ENCODE measurements at regions of chr15 and their contacts with region 1.

Region 1: DNA sequence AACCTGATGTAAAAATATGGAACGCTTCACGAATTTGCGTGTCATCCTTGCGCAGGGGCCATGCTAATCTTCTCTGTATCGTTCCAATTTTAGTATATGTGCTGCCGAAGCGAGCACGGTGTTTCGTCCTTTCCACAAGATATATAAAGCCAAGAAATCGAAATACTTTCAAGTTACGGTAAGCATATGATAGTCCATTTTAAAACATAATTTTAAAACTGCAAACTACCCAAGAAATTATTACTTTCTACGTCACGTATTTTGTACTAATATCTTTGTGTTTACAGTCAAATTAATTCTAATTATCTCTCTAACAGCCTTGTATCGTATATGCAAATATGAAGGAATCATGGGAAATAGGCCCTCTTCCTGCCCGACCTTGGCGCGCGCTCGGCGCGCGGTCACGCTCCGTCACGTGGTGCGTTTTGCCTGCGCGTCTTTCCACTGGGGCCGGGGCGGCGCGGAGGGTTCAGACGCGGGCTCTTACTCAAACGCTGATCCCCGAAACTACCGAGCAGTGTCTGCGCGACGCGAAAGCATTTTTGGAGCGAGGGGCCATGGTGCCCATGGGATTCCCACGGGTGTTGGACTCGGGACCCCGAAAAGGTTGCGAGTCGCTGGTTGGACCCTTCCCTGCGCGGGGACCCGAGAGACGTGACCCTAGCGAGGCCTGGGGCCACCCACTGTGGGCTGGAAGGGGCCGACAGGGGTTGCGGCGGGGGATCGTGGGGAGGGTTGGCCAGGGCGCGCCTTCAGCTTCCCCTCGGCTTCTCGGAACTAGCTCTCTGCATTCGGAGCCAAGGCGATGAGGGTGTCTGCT is at the start of gene RNU6-1:
- DNase-seq: peak; percentile 93 to 97 (median 94)
- ATAC-seq: peak; percentile 87 to 95 (median 91)
- H3K4me3 ChIP-seq: peak within 1 kb of the TSS; percentile 56 to 97 (median 88)
- H3K27ac ChIP-seq: peak within 1 kb of the TSS; percentile 85 to 99 (median 95)
- H3K4me1 ChIP-seq: peaks cover 0 to 37% (median 28%) of the 10 kb centered on the region in 12 donors
- H3K27me3 ChIP-seq: peaks cover 0 to 12% (median 9%) of the 10 kb centered on the region in 9 donors
- CTCF ChIP-seq: no peak
- POLR2A ChIP-seq: peak in 1 of 2 donors; percentile 84
- total RNA-seq, gene RNU6-1: not detected

Region 2: DNA sequence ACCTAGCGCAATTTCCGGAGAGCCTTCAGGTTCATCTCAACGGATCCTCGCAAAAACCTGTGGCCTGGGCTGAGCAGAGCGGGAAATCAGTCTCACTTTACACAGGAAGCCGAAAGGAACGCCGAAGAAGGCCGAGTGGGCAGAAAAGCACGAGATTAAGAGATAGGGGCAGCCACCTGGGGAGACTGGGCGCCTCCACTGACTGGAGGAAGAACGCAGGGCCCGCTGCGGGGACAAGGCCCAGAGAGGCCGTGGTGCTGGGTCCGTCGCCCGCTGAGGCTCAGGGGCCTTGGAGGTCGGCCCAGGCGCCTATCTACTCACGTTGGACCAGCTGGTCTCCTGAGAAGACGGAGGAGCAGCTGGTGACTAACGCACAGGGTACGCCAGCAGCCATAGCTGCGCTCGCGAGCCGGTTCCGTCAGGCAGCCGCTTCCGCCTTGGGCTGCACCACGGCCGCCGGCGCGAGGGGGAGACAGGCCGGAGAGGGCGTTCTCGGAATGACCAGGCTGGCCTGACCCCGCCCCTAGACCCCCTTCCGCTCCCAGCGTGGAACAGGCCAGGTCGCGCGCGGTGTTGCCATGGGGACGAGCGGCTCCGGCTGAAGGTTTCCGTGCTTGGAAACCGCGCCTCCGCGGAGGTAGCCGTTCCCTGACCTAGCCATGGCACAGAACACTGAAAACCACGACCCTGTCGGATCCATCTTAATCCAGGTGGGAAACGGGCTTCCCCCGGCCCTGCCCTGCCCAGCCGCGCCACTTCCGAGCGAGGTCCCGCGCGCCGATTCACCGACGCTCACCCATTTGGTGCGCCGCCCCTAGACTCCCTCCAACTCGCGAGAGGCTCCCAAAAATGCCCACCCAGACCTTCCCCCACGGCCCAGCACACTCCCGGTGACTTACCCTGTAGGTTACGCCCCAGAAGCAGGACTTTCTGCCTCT is 585.6 kb before region 1 on chr15 and contains the starts of genes AAGAB and IQCH:
- intact Hi-C with region 1: loop called in 1 of 10 experiments (anchors 5 kb)
- DNase-seq: peak; percentile 97 to 100 (median 98)
- ATAC-seq: peak; percentile 99 to 100 (median 100)
- H3K4me3 ChIP-seq: peak within 1 kb of the TSS; percentile 73 to 97 (median 88)
- H3K27ac ChIP-seq: peak within 1 kb of the TSS; percentile 10 to 91 (median 81)
- H3K4me1 ChIP-seq: peaks cover 0 to 29% (median 12%) of the 10 kb centered on the region in 12 donors
- H3K27me3 ChIP-seq: no peaks in the 10 kb centered on the region
- CTCF ChIP-seq: peak in 3 of 12 donors; percentile 13 to 22 (median 22)
- POLR2A ChIP-seq: peak in 1 of 2 donors; percentile 76
- total RNA-seq, gene AAGAB: 16.4 to 32.4 (median 28.0) TPM
- total RNA-seq, gene IQCH: 0.24 to 3.3 (median 1.4) TPM

Region 3: DNA sequence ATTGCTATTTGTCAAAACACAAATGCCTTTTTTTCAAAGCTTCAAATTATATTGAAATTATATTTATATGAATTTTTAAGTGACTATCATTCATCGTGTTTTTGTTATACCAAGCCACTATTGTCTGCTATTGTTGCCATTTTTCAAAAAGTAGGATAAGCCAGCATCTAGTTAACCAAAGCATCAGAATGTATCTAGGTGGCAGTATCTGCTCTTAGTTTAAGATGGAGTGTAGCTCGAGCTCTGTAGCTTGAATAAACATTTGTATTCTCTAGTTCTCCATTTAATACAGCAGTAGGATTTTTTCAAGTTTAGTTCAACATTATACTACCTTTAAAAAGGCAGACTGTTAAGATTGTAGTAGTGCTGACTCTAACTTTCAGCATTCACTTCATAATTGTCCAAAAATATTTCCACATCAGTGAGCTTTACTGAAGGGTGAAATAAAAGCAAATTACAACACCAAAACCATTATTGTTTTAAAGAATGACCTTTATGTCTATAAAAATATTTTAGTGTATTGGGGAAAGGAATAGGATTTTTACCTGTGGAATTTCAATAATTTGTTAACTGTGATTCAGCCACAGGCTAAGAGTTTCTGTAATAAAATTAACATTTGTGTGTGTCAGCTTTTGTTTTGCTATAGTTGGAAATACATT is 338.8 kb before region 1 on chr15:
- intact Hi-C with region 1: loop called in 4 of 10 experiments (anchors 5 kb)
- DNase-seq: no peak
- ATAC-seq: peak in 1 of 4 donors; percentile 39
- H3K4me3 ChIP-seq: peak overlapping the region in 1 of 12 donors; percentile 5
- H3K27ac ChIP-seq: no peak overlapping the region
- H3K4me1 ChIP-seq: peaks cover 0 to 6% (median 0%) of the 10 kb centered on the region in 12 donors
- H3K27me3 ChIP-seq: no peaks in the 10 kb centered on the region
- CTCF ChIP-seq: peak in 9 of 12 donors; percentile 10 to 52 (median 38)
- POLR2A ChIP-seq: no peak

Region 4: DNA sequence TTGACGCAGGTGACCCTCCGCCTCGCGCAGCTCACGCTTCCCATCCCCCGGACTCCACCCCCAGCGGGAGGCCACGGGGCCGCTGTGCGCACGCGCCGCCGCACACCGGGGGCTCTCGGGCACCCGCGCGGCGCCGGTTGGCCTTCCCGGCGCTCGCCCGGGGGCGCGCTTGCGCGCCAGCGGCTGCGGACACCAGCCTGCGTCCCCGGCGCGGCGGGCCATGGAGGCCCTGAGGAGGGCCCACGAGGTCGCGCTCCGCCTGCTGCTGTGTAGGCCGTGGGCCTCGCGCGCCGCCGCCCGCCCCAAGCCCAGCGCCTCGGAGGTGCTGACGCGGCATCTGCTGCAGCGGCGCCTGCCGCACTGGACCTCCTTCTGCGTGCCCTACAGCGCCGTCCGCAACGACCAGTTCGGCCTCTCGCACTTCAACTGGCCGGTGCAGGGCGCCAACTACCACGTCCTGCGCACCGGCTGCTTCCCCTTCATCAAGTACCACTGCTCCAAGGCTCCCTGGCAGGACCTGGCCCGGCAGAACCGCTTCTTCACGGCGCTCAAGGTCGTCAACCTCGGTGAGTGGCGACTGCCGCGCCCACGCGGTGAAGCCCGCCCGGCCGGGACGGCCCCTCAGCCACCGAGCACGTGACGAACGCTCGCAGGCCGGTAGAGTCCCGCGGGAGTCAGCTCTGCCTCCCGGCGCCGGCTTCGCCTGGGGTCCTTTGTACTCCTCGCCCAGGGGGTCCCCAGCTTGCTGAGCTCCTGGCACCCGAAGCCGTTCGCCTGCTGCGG is 318.9 kb before region 1 on chr15 and contains the start of gene C15orf61:
- intact Hi-C with region 1: loop called in 7 of 10 experiments (anchors 2 to 10 kb)
- DNase-seq: peak; percentile 87 to 92 (median 89)
- ATAC-seq: peak; percentile 76 to 95 (median 90)
- H3K4me3 ChIP-seq: peak within 1 kb of the TSS; percentile 54 to 95 (median 74)
- H3K27ac ChIP-seq: peak within 1 kb of the TSS; percentile 92 to 99 (median 97)
- H3K4me1 ChIP-seq: peaks cover 0 to 37% (median 25%) of the 10 kb centered on the region in 12 donors
- H3K27me3 ChIP-seq: no peaks in the 10 kb centered on the region
- CTCF ChIP-seq: peak in 3 of 12 donors; percentile 10 to 26 (median 11)
- POLR2A ChIP-seq: peak in 1 of 2 donors; percentile 77
- total RNA-seq, gene C15orf61: 5.0 to 11.7 (median 10.0) TPM

Region 5: DNA sequence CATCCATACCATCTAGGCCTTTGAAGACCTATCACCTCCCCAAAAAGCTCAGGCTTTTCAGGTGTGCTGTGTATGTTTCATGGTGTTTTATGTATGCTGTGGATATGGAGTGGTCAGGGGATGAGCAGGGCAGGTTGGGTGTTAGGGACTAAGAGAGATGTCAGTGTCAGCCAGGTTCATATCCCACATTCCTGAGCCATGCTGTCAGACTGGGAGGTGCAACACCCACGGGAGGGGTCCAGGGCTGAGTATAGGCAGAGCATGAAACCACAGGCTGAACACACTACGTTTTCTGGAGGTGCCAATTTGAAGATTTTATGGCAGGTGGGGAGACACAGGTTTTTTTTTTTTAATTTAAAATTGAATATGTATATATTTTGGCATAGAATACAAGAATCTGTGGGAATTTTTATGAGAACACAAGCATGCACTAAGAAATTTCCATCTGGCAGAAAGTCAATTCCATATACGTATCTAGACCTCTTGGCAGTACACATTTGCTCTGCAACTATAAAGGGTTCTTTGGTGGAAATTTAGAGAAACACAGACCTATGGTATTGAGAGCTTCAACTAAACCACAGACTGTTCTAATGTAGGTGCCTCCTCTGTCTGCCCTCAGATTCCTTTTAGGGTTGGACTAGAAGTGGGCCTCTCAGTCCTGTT is 101.6 kb after region 1 on chr15:
- intact Hi-C with region 1: no loop called
- DNase-seq: no peak
- ATAC-seq: no peak
- H3K4me3 ChIP-seq: no peak overlapping the region
- H3K27ac ChIP-seq: peak overlapping the region in 1 of 12 donors; percentile 26
- H3K4me1 ChIP-seq: peaks cover 0 to 43% (median 24%) of the 10 kb centered on the region in 12 donors
- H3K27me3 ChIP-seq: no peaks in the 10 kb centered on the region
- CTCF ChIP-seq: no peak
- POLR2A ChIP-seq: no peak

Measured in heart left ventricle (tissue), 16 donors.